ENCODE measurements at regions of chr12 and their contacts with region 1.

Region 1: DNA sequence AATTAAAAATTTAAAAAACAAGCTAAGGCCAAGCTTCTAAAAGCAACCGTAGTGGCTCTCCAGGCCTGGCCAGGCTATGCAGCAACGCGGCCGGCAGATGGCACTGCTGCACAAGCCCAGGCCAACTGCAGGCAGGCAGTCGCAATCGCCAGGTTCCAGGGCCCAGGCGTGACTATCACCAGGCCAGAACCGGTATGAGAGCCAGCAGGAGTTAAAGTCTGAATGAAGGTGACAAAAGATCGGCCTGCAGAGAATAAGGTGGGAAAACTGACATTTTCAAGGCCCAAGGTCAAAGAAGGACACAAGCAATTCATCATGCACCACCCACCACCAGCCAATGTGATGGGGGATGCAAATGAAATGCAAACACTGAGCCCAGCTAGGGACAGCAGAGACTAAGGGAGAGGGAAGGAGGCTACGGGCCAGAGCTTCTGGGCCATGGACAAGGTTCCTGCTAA is 43.6 kb upstream of the ANO2 start:
- DNase-seq: peak; percentile 75 to 86
- H3K4me3 ChIP-seq: no peak overlapping the region
- H3K27ac ChIP-seq: no peak overlapping the region; the same call in 1 of the 2 replicates
- H3K4me1 ChIP-seq: peaks cover 2 to 6% (median 4%) of the 10 kb centered on the region in 4 experiments; a peak in 6 of 7 replicates
- H3K27me3 ChIP-seq: no peaks in the 10 kb centered on the region
- CTCF ChIP-seq: peak; percentile 93 to 99 (median 97)
- EP300 ChIP-seq: peak in 1 of 2 experiments; percentile 57; a peak in 1 of 3 replicates
- POLR2A ChIP-seq: no peak
- RAD21 ChIP-seq: peak; percentile 98 to 99

Region 2: GRCh38 chr12:5720381-5721005 is 268.2 kb before region 1 on chr12:
- CTCF ChIA-PET with region 1: no interaction called
- POLR2A ChIA-PET with region 1: no interaction called
- DNase-seq: no peak
- H3K4me3 ChIP-seq: no peak overlapping the region
- H3K27ac ChIP-seq: no peak overlapping the region
- H3K4me1 ChIP-seq: peaks cover 0 to 3% (median 0%) of the 10 kb centered on the region in 4 experiments; a peak in 1 of 7 replicates
- H3K27me3 ChIP-seq: no peaks in the 10 kb centered on the region
- CTCF ChIP-seq: no peak
- EP300 ChIP-seq: no peak
- POLR2A ChIP-seq: no peak
- RAD21 ChIP-seq: no peak

Region 3: GRCh38 chr12:5817246-5817645 is 171.4 kb before region 1 on chr12:
- CTCF ChIA-PET with region 1: no interaction called
- POLR2A ChIA-PET with region 1: no interaction called
- DNase-seq: no peak
- H3K4me3 ChIP-seq: no peak overlapping the region
- H3K27ac ChIP-seq: no peak overlapping the region
- H3K4me1 ChIP-seq: no peaks in the 10 kb centered on the region
- H3K27me3 ChIP-seq: no peaks in the 10 kb centered on the region
- CTCF ChIP-seq: no peak
- EP300 ChIP-seq: no peak
- POLR2A ChIP-seq: no peak
- RAD21 ChIP-seq: no peak

Region 4: GRCh38 chr12:5846950-5847349 is 141.7 kb before region 1 on chr12:
- CTCF ChIA-PET with region 1: no interaction called
- POLR2A ChIA-PET with region 1: no interaction called
- DNase-seq: no peak
- H3K4me3 ChIP-seq: no peak overlapping the region
- H3K27ac ChIP-seq: no peak overlapping the region
- H3K4me1 ChIP-seq: no peaks in the 10 kb centered on the region
- H3K27me3 ChIP-seq: no peaks in the 10 kb centered on the region
- CTCF ChIP-seq: no peak
- EP300 ChIP-seq: no peak
- POLR2A ChIP-seq: no peak
- RAD21 ChIP-seq: no peak

Region 5: DNA sequence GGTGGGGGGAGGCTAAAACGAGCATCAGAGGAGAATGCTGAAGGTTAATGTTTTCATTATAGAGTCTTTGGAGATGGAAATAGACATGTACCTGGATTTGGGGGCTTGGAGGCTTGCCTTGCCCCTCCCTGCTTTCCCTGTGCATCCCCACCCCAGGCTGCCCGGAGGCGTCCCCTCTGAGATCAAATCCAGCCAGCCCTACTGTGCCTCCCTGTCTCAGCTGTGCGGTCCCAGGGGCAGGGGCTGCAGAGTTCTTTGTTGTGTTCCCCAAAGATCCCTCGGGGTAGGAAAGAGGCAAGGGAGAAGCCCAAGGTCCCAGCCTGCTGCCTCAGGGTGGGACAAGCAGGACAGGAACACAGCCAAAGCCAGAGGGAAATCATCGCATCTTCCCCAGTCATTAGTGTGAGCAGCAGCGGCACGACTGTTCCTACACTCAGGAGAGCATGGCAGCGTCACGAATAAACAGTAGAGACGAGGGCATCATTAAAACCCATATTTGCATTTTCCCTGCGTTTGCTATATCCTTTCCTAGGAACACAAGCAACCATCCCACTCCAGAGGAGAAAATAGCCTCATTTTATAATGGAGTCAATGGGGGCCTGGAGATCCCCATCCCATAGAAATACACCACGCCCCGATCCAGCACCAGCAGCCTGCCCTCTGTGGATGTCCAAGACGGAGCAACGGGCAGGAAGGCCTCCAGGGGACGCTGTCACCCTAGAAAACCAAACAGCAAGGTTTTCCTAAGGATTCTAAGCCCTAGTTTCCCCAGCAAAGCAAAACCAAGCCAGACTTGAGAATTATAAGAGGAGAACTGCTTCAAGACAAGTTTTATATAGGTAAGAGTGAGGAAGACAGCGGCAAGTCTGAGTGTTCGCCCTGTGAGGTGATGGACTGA is 76.0 kb before region 1 on chr12:
- CTCF ChIA-PET with region 1: interaction called, 26 read pairs
- POLR2A ChIA-PET with region 1: no interaction called
- DNase-seq: peak; percentile 51 to 88
- H3K4me3 ChIP-seq: no peak overlapping the region
- H3K27ac ChIP-seq: no peak overlapping the region
- H3K4me1 ChIP-seq: peaks cover 0 to 2% (median 0%) of the 10 kb centered on the region in 4 experiments; a peak in 1 of 7 replicates
- H3K27me3 ChIP-seq: no peaks in the 10 kb centered on the region
- CTCF ChIP-seq: peak; percentile 95 to 97 (median 97)
- EP300 ChIP-seq: no peak
- POLR2A ChIP-seq: no peak
- RAD21 ChIP-seq: peak; percentile 97

Region 6: GRCh38 chr12:5965950-5966383 is 22.7 kb before region 1 on chr12:
- CTCF ChIA-PET with region 1: interaction called, 45 read pairs
- POLR2A ChIA-PET with region 1: no interaction called
- DNase-seq: peak in 1 of 2 experiments; percentile 81
- H3K4me3 ChIP-seq: no peak overlapping the region
- H3K27ac ChIP-seq: no peak overlapping the region
- H3K4me1 ChIP-seq: peaks cover 5 to 14% (median 12%) of the 10 kb centered on the region in 4 experiments; a peak in 6 of 7 replicates
- H3K27me3 ChIP-seq: 0 out of 7 replicates have a peak, but pooled peaks cover 0 to 3% (median 0%) of the 10 kb centered on the region in 4 experiments
- CTCF ChIP-seq: peak; percentile 84 to 90 (median 88)
- EP300 ChIP-seq: no peak
- POLR2A ChIP-seq: no peak
- RAD21 ChIP-seq: peak; percentile 51 to 63

Region 7: DNA sequence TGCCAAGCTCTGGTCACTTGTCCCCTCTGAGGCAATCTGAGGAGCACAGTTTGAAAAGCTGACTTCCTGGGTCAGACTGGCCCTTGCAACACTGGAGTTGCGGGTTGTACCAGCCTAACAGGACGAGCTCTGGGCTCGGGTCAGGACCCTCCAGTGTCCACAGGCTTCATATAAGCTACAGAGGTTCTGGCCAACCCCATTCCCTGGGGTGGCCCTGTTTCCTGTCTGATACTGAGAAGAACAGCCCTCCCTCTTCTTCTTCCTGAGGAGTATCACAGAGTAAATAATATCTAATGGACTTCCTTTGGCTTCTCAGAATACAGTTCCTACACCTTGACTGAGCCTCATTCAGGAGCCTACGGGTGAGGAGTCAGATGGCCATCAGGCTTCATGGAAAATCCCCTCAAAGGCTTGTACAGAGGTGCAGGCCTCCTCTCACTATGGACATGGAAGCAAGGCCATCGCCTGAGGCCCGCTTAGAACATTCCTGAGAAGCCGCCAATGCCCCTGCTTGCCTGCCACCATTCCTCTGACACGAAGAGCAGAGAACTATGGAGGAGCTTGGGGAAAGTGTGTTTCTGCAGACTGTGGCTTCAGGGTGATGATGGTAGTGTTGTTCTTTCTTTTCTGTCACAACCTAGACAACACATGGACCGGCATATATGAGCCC is 15.1 kb before region 1 on chr12:
- CTCF ChIA-PET with region 1: interaction called, 28 read pairs
- POLR2A ChIA-PET with region 1: no interaction called
- DNase-seq: no peak
- H3K4me3 ChIP-seq: no peak overlapping the region
- H3K27ac ChIP-seq: no peak overlapping the region
- H3K4me1 ChIP-seq: no peaks in the 10 kb centered on the region
- H3K27me3 ChIP-seq: peaks cover 0 to 2% (median 0%) of the 10 kb centered on the region in 4 experiments; a peak in 1 of 7 replicates
- CTCF ChIP-seq: no peak
- EP300 ChIP-seq: no peak
- POLR2A ChIP-seq: no peak
- RAD21 ChIP-seq: no peak

Region 8: DNA sequence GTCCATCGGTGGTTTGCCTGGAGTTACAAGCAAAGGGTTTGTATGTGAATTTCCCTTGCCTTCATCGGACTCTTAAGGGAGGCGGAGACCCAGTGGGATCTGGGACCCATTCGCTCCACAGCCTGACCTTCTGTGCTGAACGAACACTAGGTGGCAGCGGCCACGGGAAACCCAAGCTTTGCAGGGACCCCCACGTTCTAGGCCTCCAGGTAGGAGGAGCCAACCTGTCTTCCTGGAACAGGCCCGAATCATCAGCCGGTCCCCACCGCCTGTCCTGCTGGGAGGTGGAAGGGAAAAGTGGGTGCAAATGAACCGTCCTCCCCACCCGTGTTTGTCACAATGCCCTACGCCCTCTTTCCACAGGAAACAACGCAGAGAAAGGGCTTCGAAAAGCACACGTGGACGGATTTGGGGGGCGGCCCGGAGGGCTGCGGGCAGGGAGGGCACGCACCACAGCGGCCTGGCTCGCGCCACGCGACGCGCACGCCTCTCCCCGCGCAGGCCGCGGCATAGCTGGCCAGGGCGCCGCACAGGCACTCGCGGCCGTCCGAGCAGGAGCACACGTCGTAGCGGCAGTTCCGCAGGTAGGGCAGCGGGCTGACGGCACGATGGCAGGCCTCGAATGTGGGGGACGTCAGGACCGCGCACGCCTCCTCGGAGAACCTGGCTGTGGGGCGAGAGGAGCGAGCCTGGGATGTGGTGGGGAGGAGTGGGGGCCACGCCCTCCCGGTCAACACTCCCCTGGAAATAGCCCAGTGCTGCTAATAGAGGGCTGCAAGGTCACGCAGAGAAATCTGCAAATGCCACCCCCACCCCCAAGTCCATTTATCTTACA is 67.9 kb after region 1 on chr12:
- CTCF ChIA-PET with region 1: interaction called, 14 read pairs
- POLR2A ChIA-PET with region 1: no interaction called
- DNase-seq: peak; percentile 33 to 63
- H3K4me3 ChIP-seq: peak overlapping the region; percentile 38 to 62 (median 40)
- H3K27ac ChIP-seq: no peak overlapping the region
- H3K4me1 ChIP-seq: peaks cover 7 to 18% (median 16%) of the 10 kb centered on the region in 4 experiments
- H3K27me3 ChIP-seq: peaks cover 0 to 16% (median 10%) of the 10 kb centered on the region in 4 experiments; a peak in 5 of 7 replicates
- CTCF ChIP-seq: peak; percentile 58 to 66 (median 60)
- EP300 ChIP-seq: no peak
- POLR2A ChIP-seq: no peak
- RAD21 ChIP-seq: peak; percentile 25 to 56; a peak in 3 of 4 replicates